ENCODE measurements at regions of chr10 and their contacts with region 1.

Region 1: DNA sequence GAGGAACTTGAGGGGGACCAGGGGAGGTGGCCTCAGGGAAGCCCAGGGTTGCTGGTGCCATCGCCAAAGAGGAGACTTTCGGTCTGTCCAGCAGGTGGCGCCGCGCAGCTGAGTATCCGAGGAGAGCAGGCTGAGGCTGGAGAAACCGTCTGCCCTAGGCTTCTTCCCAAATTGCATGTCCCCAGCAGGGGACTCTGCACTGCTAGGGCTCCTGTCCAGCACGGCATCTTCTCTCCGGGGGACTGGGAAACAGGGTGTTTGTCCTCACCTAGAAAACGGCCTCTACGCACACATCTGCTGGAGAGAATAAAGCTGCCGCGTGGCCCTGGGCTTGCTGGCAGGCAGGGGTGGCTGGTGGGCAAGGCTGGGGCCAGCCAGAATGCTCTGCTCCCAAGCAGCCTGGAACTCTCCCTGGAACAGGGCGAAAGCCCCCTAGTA is 161.9 kb downstream of the SH2D4B start:
- DNase-seq: peak; percentile 57 to 87 (median 82)
- H3K4me3 ChIP-seq: peak overlapping the region in 20 of 59 donors; percentile 3 to 50 (median 24)
- H3K27ac ChIP-seq: peak overlapping the region in 1 of 59 donors; percentile 44
- H3K27me3 ChIP-seq: peaks cover 0 to 3% (median 0%) of the 10 kb centered on the region in 45 donors
- CTCF ChIP-seq: peak; percentile 68 to 97 (median 90)

Region 2: DNA sequence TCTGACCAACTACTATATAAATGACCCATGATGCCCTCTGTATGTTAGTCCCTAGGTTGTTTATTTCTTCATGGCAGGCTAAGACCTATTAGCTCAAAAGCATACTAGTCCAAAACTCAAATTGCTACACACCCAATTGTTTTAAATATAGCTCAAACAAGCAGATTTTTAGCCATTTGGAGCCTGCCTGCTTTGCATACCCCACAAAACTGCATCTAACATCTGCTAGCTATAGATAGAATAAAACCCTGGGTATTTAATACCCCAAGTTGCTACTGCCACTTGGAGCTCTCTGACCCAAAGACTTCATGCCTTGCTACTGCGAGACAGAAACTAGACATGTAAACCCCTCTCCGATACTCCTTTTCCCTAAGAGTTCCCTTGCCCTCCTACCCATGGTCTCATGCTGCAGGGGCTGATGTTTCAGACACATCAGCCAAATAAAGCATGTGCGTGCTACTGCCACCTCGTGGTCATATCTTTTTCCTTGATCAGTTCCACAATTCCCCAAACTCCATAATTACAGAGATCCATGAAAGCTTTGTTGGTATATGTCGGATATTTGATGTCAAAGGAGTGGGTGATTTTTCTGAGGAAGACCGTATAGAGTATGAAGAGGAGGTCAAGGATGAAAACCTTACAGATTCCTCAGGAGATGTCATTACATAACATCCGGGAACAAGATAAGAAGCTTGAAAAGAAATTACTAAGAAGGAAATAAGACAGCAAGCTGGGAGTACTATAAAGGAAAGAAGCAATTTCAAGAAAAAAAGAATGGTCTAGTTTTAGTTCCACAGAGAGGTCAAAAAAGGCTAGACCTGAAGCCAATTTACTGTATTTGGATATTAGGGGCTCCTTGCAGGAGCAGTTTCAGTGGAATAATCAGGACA is 224.7 kb after region 1 on chr10:
- intact Hi-C with region 1: loop called in 1 of 2 experiments (anchors 5 kb)
- DNase-seq: peak in 4 of 10 donors; percentile 12 to 41 (median 37)
- H3K4me3 ChIP-seq: no peak overlapping the region
- H3K27ac ChIP-seq: no peak overlapping the region
- H3K27me3 ChIP-seq: peaks cover 0 to 3% (median 0%) of the 10 kb centered on the region in 45 donors
- CTCF ChIP-seq: peak; percentile 55 to 84 (median 74)

Region 3: GRCh38 chr10:80938903-80939302 is 239.3 kb after region 1 on chr10:
- intact Hi-C with region 1: loop called in 1 of 2 experiments (anchors 10 kb)
- DNase-seq: no peak
- H3K4me3 ChIP-seq: no peak overlapping the region
- H3K27ac ChIP-seq: no peak overlapping the region
- H3K27me3 ChIP-seq: no peaks in the 10 kb centered on the region
- CTCF ChIP-seq: no peak

Region 4: GRCh38 chr10:81021428-81022129 is 322.0 kb after region 1 on chr10:
- intact Hi-C with region 1: loop called in 1 of 2 experiments (anchors 10 kb)
- DNase-seq: no peak
- H3K4me3 ChIP-seq: no peak overlapping the region
- H3K27ac ChIP-seq: no peak overlapping the region
- H3K27me3 ChIP-seq: no peaks in the 10 kb centered on the region
- CTCF ChIP-seq: no peak

Region 5: DNA sequence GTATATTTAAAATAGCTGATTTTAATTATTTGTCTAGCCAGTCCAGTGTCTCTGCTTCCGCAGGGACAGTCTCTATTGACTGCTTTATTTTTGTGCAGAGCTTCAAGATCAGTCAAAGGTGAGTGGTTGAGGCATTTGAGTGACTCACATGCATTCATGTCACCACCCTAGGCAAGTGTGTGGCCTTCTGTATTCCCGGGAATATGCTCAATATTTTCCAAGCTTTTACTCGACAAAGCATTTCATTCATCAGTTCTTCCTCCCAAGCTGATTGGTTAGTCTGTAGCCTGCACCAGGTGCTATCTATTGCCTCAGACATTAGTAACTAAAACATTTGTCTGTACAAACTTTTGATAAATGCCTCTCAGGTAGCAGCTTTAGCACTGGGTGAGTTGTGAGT is 703.8 kb after region 1 on chr10:
- intact Hi-C with region 1: no loop called
- DNase-seq: no peak
- H3K4me3 ChIP-seq: no peak overlapping the region
- H3K27ac ChIP-seq: no peak overlapping the region
- H3K27me3 ChIP-seq: no peaks in the 10 kb centered on the region
- CTCF ChIP-seq: no peak

Measured in dorsolateral prefrontal cortex (tissue), 120 donors.